ENCODE measurements at regions of chr12 and their contacts with region 1.

Region 1: DNA sequence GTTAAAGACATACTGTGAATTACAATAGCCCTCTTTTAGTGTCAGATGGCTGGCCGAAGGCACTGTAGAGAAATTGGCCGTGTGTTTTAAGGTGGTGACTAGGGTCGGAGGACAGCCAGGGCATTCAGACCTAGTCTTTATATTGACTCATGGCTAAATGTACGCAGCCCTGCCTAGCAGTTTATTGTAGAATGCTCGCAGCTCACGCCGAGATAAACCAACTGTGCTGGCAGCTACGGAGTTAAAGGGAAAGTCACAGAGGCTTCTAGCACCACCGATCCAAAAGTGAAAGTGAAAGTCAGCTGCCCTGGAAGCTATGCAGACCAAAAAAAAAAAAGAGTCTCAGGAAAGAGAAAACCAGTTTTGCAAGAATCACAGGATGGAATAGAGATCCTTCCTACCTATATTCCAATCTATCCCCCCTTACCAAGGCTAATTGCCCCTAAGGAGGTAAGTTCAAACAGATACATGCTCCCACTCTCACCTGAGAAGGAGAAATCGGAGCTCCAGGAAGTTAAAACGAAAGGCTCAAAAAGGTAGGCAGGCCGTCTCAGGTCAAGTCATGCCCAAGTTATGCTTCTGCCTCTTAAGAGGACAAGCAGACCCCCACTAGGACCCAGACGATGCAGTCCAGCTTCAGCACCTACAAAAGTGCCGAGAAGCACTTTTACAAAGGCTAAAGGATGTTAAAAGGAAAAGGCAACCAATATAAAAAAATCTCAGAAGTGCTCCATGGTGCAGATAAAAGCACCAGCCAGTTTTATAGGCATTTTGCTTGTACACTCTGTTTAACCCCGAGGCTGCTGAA is 24.8 kb downstream of the KLRK1 start:
- H3K4me3 Mint-ChIP-seq: no peak overlapping the region
- H3K27ac Mint-ChIP-seq: no peak overlapping the region
- H3K4me1 Mint-ChIP-seq: no peaks in the 10 kb centered on the region
- H3K27me3 Mint-ChIP-seq: no peaks in the 10 kb centered on the region

Region 2: GRCh38 chr12:10409387-10409786 is 44.4 kb after region 1 on chr12 and contains the start of gene KLRC4:
- intact Hi-C with region 1: loop called (anchors 5 kb)
- H3K4me3 Mint-ChIP-seq: no peak within 1 kb of the TSS
- H3K27ac Mint-ChIP-seq: no peak within 1 kb of the TSS
- H3K4me1 Mint-ChIP-seq: peaks cover 12% of the 10 kb centered on the region
- H3K27me3 Mint-ChIP-seq: peaks cover 10% of the 10 kb centered on the region